Panc1 (cell line): ENCODE measurements at regions of chr2 and their contacts with region 1.

Region 1: GRCh38 chr2:232857158-232857563 is 12.9 kb upstream of the SNORC start:
- DNase-seq: no peak
- ATAC-seq: no peak
- H3K4me3 ChIP-seq: no peak overlapping the region
- H3K27ac ChIP-seq: no peak overlapping the region
- H3K4me1 ChIP-seq: peaks cover 16% of the 10 kb centered on the region
- H3K27me3 ChIP-seq: no peaks in the 10 kb centered on the region
- CTCF ChIP-seq: no peak

Region 2: DNA sequence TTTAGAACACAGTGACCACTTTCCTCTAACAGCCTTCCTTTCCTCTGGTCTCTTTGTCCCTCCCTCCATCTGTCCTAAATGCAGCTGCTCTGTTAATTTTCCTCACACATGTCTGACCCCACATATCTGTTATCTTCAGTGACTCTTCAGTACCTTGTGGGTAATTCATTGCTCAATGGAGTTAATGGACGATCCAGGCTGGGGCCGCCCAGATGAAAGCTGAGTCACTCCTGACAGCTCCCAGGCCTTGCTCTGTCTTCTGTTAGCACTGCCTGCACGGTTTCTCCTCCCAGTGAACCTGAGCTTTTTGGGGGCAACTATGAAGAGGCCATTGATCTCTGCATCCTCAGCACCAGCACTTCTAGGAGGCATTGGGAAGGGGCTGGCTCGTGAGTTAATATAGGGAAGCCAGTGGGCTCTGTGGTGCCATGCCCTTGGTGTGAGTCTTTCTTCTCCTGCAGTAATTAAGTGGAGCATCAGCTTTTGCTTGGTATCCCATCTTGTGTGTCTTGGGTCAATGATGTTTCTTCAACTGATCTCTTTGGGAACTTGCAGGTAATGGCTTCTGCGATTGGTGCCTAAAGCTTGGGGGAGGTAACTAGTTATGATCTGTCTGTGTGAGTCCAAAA is 80.2 kb after region 1 on chr2:
- CTCF ChIA-PET with region 1: no interaction called
- POLR2A ChIA-PET with region 1: interaction called, 16 read pairs
- in situ Hi-C with region 1: no loop called
- intact Hi-C with region 1: no loop called
- DNase-seq: no peak
- ATAC-seq: no peak
- H3K4me3 ChIP-seq: no peak overlapping the region
- H3K27ac ChIP-seq: no peak overlapping the region
- H3K4me1 ChIP-seq: no peaks in the 10 kb centered on the region
- H3K27me3 ChIP-seq: no peaks in the 10 kb centered on the region
- CTCF ChIP-seq: no peak